Activated CD8-positive, alpha-beta T cell treated with anti-CD3 and anti-CD28 coated beads for 36 hours (primary cell): ENCODE measurements at regions of chr1 and their contacts with region 1.

Region 1: DNA sequence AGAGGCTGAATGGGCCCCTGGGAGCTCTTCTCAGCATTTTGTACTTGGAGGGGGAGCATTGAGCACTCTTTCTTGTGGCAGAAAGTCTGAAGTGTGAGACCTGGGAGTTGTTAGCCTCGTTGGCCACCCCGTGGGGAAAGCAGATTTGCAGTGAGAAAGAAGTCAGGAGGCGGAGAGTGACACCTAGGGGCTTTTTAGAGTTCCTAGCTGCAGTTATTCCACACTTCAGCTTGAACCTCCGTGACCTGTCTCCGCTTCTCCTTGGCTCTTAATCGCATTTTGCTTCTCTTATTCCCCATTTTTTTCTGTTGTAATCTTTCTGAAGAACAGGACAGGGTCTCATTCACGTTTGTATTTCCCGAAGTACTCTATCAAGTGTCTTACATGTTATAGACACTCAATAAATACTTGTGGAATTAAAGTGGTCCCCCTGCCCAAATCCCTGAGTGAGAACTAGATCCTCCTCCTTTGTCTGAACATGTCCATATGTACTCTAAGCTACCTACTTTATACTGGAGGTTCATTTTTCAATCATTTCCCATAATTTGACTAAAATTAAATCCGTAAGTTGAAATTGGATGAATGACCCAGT is 14.5 kb upstream of the C1orf141 start:
- DNase-seq: peak; percentile 79
- ATAC-seq: peak; percentile 91
- H3K4me3 Mint-ChIP-seq: no peak overlapping the region
- H3K27ac Mint-ChIP-seq: peak overlapping the region; percentile 44
- H3K4me1 Mint-ChIP-seq: peaks cover 36% of the 10 kb centered on the region
- H3K27me3 Mint-ChIP-seq: peaks cover 21% of the 10 kb centered on the region
- CTCF ChIP-seq: peak; percentile 67

Region 2: GRCh38 chr1:66764994-66765578 is 384.2 kb before region 1 on chr1:
- CTCF ChIA-PET with region 1: interaction called, 28 read pairs
- POLR2A ChIA-PET with region 1: no interaction called
- intact Hi-C with region 1: loop called (anchors 2 kb)
- DNase-seq: peak; percentile 78
- ATAC-seq: peak; percentile 76
- H3K4me3 Mint-ChIP-seq: no peak overlapping the region
- H3K27ac Mint-ChIP-seq: no peak overlapping the region
- H3K4me1 Mint-ChIP-seq: peaks cover 16% of the 10 kb centered on the region
- H3K27me3 Mint-ChIP-seq: no peaks in the 10 kb centered on the region
- CTCF ChIP-seq: peak; percentile 86

Region 3: GRCh38 chr1:66996018-66996682 is 153.1 kb before region 1 on chr1:
- CTCF ChIA-PET with region 1: interaction called, 74 read pairs
- POLR2A ChIA-PET with region 1: no interaction called
- intact Hi-C with region 1: loop called (anchors 5 kb)
- DNase-seq: peak; percentile 83
- ATAC-seq: peak; percentile 88
- H3K4me3 Mint-ChIP-seq: no peak overlapping the region
- H3K27ac Mint-ChIP-seq: no peak overlapping the region
- H3K4me1 Mint-ChIP-seq: peaks cover 17% of the 10 kb centered on the region
- H3K27me3 Mint-ChIP-seq: no peaks in the 10 kb centered on the region
- CTCF ChIP-seq: peak; percentile 71

Region 4: DNA sequence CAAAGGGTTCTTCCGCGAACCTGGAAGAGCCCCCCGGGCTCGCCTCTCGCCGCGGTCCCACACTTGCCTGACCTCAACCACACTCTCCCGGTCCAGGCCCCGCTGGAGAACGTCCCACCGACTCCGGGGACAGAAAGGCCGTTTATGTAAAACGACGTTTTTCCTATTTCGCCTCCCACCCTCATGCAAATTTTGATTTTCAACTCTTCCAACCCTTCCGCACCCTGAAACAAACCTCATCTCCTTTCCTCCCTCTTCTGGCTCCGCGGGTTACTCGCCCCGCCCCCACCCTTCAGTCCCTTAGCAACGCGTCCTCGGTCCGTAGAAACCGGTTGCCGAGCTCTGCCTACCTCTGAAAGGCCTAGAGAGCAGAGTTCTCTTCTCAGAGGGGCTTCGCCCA is 14.6 kb before region 1 on chr1 and contains the start of gene C1orf141:
- CTCF ChIA-PET with region 1: interaction called, 15 read pairs
- POLR2A ChIA-PET with region 1: no interaction called
- intact Hi-C with region 1: no loop called
- DNase-seq: peak; percentile 43
- ATAC-seq: peak; percentile 75
- H3K4me3 Mint-ChIP-seq: peak within 1 kb of the TSS; percentile 70
- H3K27ac Mint-ChIP-seq: no peak within 1 kb of the TSS
- H3K4me1 Mint-ChIP-seq: peaks cover 8% of the 10 kb centered on the region
- H3K27me3 Mint-ChIP-seq: peaks cover 4% of the 10 kb centered on the region
- CTCF ChIP-seq: no peak
- total RNA-seq, gene C1orf141: not detected

Region 5: DNA sequence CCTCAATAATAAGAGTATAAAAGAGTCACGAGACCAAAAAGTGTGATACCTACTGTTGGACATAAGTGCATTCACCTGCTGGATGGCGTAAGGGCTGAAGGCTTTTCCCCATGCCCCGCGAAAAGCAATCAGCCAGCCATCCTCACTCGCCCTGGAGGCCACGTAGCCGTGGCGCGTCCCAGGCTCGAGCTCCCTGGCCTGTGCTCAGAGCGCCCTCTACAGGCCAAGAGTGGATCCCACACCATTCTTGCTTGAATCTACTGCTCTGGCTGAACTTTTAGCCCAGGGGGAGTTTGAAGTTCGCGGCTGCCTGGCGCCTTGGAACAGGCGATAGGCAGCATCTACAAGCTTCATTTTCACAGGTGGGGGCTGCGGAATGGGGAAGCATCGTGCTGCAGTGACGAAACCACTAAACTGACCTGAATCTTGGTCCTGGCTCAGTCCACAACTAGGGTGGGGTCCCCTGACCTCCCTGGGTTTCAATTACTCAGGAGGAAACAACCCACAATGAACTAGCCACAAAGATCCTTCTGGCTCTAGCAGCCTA is 351.2 kb after region 1 on chr1:
- CTCF ChIA-PET with region 1: interaction called, 12 read pairs
- POLR2A ChIA-PET with region 1: no interaction called
- intact Hi-C with region 1: no loop called
- DNase-seq: peak; percentile 95
- ATAC-seq: peak; percentile 100
- H3K4me3 Mint-ChIP-seq: no peak overlapping the region
- H3K27ac Mint-ChIP-seq: peak overlapping the region; percentile 21
- H3K4me1 Mint-ChIP-seq: peaks cover 7% of the 10 kb centered on the region
- H3K27me3 Mint-ChIP-seq: peaks cover 7% of the 10 kb centered on the region
- CTCF ChIP-seq: peak; percentile 92